Common myeloid progenitor, CD34-positive (primary cell): ENCODE measurements at regions of chr15 and their contacts with region 1.

Region 1: DNA sequence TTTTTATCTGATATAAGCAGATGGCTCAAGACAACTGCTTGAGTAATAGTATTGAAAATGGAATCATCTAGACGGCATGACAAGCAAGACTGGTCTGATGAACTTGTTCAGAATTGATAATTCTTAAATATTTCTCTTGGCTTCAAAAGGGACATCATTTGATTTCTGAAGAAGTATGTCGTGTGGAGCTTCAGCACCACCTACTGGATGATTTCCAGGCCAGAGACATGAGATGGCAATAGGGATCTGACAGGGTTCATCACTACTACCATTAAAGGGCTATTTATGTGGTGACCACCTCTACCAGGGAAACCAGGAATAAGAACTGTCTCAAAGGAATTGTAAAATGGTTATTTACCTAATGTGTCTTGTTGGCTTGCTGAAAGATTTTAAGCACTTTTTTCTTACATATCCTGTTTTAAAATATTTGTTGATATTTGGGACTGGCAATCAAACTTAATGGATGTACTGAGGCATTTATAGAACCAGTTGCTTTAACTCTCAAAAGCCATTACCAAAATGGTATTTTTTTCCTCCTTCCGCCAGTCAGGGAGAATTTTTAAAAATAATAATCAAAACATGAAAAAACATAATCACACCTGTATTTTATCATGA is 99.5 kb upstream of the FAM98B start:
- DNase-seq: peak; percentile 76 to 87 (median 83)
- H3K4me3 ChIP-seq: no peak overlapping the region
- H3K27ac ChIP-seq: no peak overlapping the region
- H3K4me1 ChIP-seq: no peaks in the 10 kb centered on the region
- H3K27me3 ChIP-seq: no peaks in the 10 kb centered on the region

Region 2: GRCh38 chr15:37995461-37996347 is 358.7 kb before region 1 on chr15:
- CTCF ChIA-PET with region 1: interaction called, 37 read pairs
- POLR2A ChIA-PET with region 1: no interaction called
- DNase-seq: peak; percentile 67 to 83 (median 76)
- H3K4me3 ChIP-seq: no peak overlapping the region
- H3K27ac ChIP-seq: no peak overlapping the region
- H3K4me1 ChIP-seq: no peaks in the 10 kb centered on the region
- H3K27me3 ChIP-seq: no peaks in the 10 kb centered on the region

Region 3: DNA sequence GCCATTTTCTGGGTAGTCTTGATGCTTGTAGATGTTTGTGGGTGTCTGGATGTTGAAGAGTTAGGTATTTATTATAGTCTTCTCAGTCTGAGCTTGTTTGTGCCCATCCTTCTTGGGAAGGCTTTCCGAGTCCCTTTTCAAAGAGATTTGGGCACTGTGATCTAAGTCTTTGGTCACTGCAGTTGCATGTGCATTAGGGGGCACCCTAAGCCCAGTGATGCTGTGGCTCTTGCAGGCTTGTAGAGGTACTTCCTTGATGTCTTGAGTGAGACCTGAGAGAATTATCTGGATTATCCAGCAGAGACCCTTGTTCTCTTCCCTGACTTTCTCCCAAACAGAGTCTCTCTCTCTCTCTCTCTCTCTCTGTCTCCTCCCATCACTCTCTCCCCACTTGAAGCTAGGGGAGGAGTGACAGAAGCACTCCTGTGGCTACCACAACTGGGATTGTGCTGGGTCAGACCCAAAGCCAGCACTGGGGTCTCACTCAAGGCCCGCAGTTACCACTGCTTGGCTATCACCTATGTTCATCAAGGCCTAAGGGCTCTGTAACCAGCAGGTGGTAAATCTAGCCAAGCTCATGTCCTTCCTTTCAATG is 351.4 kb before region 1 on chr15:
- CTCF ChIA-PET with region 1: interaction called, 37 read pairs
- POLR2A ChIA-PET with region 1: no interaction called
- DNase-seq: peak; percentile 54 to 77 (median 77)
- H3K4me3 ChIP-seq: no peak overlapping the region
- H3K27ac ChIP-seq: no peak overlapping the region
- H3K4me1 ChIP-seq: peaks cover 0 to 6% (median 0%) of the 10 kb centered on the region in 4 experiments
- H3K27me3 ChIP-seq: no peaks in the 10 kb centered on the region

Region 4: DNA sequence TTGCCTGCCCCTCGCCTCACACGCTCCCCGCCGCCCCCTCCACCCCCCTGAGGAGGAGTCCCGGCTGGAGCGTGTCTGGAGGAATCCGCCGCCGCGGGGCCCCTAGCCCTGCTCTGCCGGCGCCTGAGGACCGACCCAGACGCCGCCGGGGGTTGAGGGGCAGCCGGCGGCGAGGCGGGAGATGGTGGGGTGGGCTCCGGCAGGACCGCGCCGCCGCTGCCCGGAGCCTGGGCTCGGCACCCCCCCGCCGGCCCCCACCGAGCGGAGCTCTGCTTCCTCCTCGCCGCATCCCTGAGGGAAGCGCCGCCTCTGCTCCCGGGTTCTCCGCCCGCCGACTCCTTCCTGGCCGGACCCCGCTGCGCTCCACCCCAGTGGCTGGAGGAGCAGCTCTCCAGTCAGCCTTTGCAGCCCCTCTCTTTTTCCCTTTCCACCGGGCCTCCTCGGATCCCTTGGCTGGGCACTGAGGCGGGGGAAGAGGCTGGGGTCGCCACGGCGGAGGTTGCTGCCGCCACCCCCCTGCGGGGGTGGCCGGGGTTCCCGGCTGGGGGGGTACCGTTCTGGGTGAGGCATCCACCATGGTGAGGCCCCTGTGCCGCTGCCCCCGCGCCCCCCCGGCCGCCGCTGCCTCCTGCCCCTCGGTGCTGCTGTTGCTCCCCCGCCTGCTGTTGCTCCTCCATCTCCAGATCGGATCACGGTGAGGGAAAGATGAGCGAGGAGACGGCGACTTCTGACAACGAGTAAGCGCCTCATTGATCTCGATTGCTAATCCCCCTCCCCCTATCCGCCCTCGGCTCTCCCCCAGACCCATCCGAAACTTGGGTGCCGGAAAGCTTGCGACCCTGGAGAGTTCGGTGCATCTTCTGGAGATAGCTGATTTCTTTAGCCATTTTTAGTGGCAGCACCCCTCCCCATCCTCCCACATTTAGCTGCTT is 101.7 kb before region 1 on chr15 and contains the start of gene SPRED1:
- CTCF ChIA-PET with region 1: interaction called, 17 read pairs
- POLR2A ChIA-PET with region 1: no interaction called
- DNase-seq: peak; percentile 9 to 50 (median 30)
- H3K4me3 ChIP-seq: peak within 1 kb of the TSS; percentile 68 to 96 (median 86)
- H3K27ac ChIP-seq: peak within 1 kb of the TSS; percentile 53 to 75
- H3K4me1 ChIP-seq: peaks cover 10 to 36% (median 25%) of the 10 kb centered on the region in 4 experiments
- H3K27me3 ChIP-seq: no peaks in the 10 kb centered on the region